ENCODE measurements at regions of chr1 and their contacts with region 1.

Region 1: DNA sequence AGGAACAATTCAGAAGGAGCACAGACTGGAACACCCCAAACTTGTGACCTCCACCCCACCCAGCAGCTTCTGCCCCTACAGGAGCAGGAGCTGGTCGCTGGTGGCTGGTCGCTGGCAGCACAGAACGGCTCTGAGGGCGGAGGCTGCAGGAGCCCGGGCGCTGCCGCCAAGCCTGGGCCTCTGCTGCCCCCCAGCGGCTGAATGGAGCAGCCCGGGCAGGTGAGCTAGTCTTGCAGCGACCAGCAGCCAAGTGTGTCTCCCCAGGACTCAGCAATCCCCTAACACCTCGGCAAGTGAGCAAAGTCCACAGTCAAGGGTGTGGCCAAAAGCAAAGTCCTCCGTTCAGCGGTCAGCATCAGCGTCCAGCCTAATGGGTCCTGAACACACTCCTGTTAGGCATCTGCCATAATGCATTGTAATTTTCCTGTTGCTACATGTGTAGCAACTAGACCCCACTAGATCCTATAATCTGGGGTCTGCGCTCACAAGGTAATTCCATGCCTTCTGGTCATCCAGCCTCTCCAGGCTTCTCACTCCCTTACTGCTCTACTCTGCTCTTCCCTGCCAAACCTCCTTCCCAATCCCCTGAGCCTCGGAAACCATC is 12.1 kb upstream of the GJB5 start:
- DNase-seq: peak; percentile 67 to 90 (median 79)
- H3K4me3 ChIP-seq: no peak overlapping the region
- H3K27ac ChIP-seq: peak overlapping the region in 1 of 59 donors; percentile 44
- H3K27me3 ChIP-seq: no peaks in the 10 kb centered on the region
- CTCF ChIP-seq: peak; percentile 39 to 97 (median 92)

Region 2: DNA sequence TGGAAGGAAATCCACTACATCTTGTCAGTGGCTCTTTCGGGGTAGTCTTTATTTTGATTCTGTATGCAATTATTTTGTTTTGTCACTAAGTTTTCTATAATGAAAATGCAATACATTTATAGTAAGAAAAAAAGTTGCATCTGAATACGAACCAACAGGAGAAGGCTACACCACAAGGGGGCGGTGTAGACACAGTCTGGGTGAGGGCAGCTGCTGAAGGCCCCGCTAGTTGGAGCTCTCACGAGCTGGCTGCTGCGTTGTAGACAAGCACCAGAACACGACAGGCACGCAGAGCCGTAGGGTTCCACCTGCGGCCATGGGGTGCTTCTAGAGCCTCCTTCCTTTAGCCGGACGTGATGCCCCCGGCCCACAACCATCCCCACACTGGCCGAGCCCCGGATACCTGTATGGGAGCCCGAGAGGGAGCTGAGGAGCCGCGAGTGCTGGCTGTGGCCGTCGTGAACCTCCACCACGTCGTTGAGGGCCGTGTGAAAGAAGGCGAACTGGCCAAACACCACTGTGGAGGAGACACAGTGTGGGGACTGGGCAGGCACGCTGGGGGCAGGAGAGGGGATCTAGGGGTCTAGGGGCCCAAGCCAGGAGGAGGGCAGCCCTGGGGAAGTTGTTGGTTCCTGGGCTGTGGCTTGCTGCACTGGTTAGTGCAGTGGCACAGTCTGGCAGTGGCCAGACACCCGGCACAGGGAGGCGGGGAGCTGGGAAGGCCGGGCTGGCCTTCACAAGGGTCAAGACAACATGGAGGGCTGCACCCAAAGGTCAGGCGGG is 1109.6 kb before region 1 on chr1:
- intact Hi-C with region 1: loop called (anchors 5 to 10 kb)
- DNase-seq: peak; percentile 82 to 96 (median 93)
- H3K4me3 ChIP-seq: peak overlapping the region in 5 of 59 donors; percentile 2 to 44 (median 19)
- H3K27ac ChIP-seq: peak overlapping the region in 4 of 59 donors; percentile 35 to 57 (median 46)
- H3K27me3 ChIP-seq: no peaks in the 10 kb centered on the region
- CTCF ChIP-seq: peak; percentile 93 to 100 (median 98)

Region 3: DNA sequence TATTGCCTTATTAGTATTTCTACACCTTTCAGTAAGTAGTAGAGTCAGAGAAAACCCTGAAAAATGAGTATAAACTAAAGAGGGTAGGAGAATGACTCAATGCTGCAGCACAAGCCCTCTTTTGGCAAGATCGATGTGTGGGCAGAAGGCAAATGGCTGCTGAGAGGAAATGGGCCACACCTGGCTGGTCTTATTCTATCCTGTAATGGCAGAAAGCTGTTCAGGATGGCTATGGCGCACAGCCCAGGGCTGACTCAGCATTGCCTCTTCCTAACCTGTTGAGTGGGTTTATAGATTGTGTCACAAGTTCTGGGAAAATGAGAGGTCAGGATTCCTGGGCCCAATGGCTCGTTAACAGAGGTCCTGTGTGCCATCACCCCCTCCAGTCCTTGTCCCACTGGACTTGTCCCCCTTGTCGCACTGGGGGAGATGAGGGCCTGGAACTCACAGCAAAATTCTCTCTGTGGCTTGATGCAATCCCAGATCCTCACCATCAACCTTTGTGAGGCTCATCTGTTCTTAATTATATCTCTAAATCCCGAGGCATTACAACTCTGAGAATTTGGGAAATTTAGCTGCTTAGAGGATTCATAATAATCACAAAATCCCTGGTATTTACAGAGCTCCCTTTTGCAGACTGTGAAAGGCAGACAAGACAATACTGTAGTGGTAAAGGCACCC is 865.7 kb before region 1 on chr1:
- intact Hi-C with region 1: loop called in 1 of 2 experiments (anchors 10 kb)
- DNase-seq: peak in 9 of 10 donors; percentile 29 to 82 (median 65)
- H3K4me3 ChIP-seq: no peak overlapping the region
- H3K27ac ChIP-seq: no peak overlapping the region
- H3K27me3 ChIP-seq: no peaks in the 10 kb centered on the region
- CTCF ChIP-seq: no peak

Region 4: GRCh38 chr1:34460193-34460592 is 282.6 kb before region 1 on chr1:
- intact Hi-C with region 1: loop called in 1 of 2 experiments (anchors 5 kb)
- DNase-seq: no peak
- H3K4me3 ChIP-seq: no peak overlapping the region
- H3K27ac ChIP-seq: no peak overlapping the region
- H3K27me3 ChIP-seq: peaks cover 0 to 3% (median 0%) of the 10 kb centered on the region in 45 donors
- CTCF ChIP-seq: peak in 53 of 56 donors; percentile 23 to 74 (median 51)

Region 5: DNA sequence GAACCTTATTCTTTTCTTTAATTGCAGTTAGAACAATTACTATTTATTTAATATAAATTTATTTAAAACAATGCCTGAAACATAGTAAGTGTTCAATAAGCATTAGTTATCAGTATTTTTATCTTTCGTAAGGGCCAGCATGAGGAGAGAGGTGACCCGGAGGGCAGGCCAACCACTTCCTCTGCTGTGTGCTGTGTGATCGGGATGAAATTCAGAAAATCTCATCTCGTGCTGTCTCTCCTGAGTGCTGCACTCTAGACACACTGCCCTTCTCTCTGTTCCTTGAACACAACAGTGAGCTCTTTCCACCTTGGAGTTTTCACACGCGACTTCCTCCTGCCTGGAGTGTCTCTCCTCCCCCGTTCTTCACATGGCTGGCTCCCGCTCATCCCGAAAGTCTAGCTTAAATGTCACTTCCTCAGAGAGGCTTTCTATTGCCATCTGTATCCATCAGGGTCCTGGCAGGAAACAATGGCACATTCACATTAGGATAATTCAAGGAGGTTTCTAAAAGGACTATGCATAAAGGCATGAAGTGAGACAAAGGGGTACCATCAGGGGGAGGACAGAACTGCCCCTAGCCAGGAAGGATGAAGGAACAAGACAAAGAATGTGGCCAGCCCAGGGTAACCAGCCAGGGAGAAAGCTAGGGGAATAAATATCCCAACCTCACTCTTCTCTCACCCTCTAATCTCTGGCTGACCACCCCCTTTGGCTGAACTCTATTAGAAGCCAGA is 130.5 kb before region 1 on chr1:
- intact Hi-C with region 1: loop called in 1 of 2 experiments (anchors 10 kb)
- DNase-seq: no peak
- H3K4me3 ChIP-seq: no peak overlapping the region
- H3K27ac ChIP-seq: no peak overlapping the region
- H3K27me3 ChIP-seq: peaks cover 0 to 22% (median 0%) of the 10 kb centered on the region in 45 donors
- CTCF ChIP-seq: no peak

Region 6: DNA sequence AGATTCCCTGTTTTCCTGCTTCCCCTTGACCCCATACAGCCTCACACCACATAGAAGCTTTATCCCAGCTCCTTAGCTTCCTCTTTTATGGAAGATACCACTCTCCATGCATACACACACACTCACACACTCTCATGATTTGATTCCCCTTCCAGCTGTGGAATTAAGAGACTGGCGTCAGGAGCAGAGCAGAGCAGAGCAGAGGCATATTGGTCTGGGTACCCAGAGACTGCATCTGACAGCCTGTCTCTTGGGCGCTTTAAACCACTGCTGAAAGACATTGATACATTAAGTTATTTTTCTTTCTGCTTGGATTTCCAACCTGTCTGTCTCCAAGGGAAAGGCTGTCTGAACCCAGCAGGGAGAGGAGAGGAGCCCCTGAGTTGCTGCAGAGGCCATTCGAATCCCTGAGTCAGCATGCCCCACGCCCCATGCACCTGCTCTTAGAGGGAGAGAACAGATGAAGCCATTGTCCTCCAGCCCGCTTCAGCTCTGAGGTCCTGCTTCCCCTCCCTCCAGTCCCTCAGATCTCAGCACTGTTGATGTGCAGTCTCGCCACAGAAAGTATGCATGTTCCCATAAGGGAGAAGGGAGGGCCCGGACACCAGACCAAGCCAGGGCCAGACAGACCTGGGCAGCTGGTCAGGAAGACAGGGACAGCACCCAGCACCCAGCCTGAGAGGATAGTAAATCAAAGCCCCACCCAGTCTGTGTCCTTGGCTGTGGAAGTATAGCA is 54.6 kb before region 1 on chr1:
- intact Hi-C with region 1: loop called in 1 of 2 experiments (anchors 5 kb)
- DNase-seq: peak in 1 of 10 donors; percentile 64
- H3K4me3 ChIP-seq: no peak overlapping the region
- H3K27ac ChIP-seq: no peak overlapping the region
- H3K27me3 ChIP-seq: peaks cover 0 to 7% (median 0%) of the 10 kb centered on the region in 45 donors
- CTCF ChIP-seq: no peak

Measured in dorsolateral prefrontal cortex (tissue), 120 donors.